Heart right ventricle (tissue), 16 donors: ENCODE measurements at regions of chr19 and their contacts with region 1.

Region 1: DNA sequence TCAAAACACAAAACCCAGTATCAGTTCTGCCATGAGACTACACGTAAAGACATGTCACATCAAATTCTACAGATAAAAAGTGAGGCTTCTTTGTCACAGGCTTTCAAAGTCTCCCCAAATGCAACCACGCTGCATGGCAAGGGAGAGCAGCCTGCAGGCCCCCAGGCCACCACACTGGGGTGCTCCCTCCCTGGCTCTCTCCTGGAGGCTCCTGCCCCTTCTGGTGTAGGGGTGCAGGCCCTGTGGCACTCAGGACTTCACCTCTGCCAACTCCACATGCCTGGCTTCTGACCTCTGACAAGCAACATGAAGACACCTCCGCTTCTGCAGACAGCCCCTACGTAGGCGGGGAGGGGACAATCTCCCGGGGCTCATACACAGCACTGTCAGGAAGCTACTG is 14.3 kb downstream of the AKAP8 start:
- DNase-seq: no peak
- ATAC-seq: no peak
- H3K4me3 ChIP-seq: no peak overlapping the region
- H3K27ac ChIP-seq: no peak overlapping the region
- H3K4me1 ChIP-seq: peaks cover 0 to 29% (median 17%) of the 10 kb centered on the region in 9 donors
- H3K27me3 ChIP-seq: no peaks in the 10 kb centered on the region
- CTCF ChIP-seq: no peak

Region 2: GRCh38 chr19:15332311-15332996 is 32.8 kb before region 1 on chr19 and contains the start of gene BRD4:
- intact Hi-C with region 1: loop called in 2 of 10 experiments (anchors 5 kb)
- DNase-seq: peak; percentile 64 to 80
- ATAC-seq: peak; percentile 69 to 86 (median 81)
- H3K4me3 ChIP-seq: peak within 1 kb of the TSS; percentile 90 to 99 (median 96)
- H3K27ac ChIP-seq: peak within 1 kb of the TSS; percentile 84 to 96 (median 93)
- H3K4me1 ChIP-seq: peaks cover 5 to 76% (median 55%) of the 10 kb centered on the region in 9 donors
- H3K27me3 ChIP-seq: no peaks in the 10 kb centered on the region
- CTCF ChIP-seq: no peak
- total RNA-seq, gene BRD4: 51.6 to 85.1 (median 54.7) TPM

Region 3: DNA sequence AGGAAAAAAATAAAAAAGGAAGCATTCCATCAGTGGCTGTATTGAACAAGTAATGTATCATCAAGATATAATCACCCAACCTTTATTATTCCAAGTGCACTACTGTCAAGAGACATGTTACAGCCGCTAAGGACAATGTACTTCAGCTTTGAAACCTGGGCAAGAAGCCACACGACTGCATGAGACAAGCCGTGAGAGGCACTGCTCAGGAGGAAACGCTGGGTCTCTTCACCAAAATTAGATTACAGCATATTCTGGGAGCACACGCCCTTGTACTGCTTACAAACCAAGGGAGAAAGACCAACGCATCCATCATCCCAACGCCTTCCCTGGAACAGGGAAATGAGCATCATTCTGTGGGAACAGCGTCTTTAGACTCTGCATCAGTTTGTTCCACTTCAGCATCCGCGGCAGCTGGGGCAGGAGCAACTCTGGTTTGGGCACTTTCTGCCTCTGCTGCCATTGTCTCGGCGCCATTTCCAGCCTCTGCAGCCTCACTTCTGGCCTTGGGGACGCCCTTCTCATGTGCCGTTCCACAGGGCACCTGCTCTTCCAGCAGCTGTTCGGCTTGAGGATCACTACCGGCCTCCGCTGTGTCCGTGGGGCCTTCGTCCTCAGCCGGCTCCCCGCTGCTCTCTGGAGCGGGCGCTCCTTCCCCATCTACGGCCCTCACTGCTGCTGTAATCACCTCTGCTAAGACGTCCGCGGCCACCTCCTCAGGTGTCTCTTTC is 10.5 kb before region 1 on chr19:
- intact Hi-C with region 1: loop called in 1 of 10 experiments (anchors 1 kb)
- DNase-seq: no peak
- ATAC-seq: peak in 7 of 8 donors; percentile 41 to 75 (median 61)
- H3K4me3 ChIP-seq: no peak overlapping the region
- H3K27ac ChIP-seq: peak overlapping the region in 1 of 10 donors; percentile 25
- H3K4me1 ChIP-seq: peaks cover 0 to 8% (median 0%) of the 10 kb centered on the region in 9 donors
- H3K27me3 ChIP-seq: no peaks in the 10 kb centered on the region
- CTCF ChIP-seq: no peak

Region 4: GRCh38 chr19:16920758-16921210 is 1555.5 kb after region 1 on chr19:
- intact Hi-C with region 1: no loop called
- DNase-seq: no peak
- ATAC-seq: peak in 1 of 8 donors; percentile 22
- H3K4me3 ChIP-seq: no peak overlapping the region
- H3K27ac ChIP-seq: no peak overlapping the region
- H3K4me1 ChIP-seq: no peaks in the 10 kb centered on the region
- H3K27me3 ChIP-seq: no peaks in the 10 kb centered on the region
- CTCF ChIP-seq: no peak